IMR-90 (cell line): ENCODE measurements at regions of chr17 and their contacts with region 1.

Region 1: GRCh38 chr17:50675627-50676026 is 32.1 kb downstream of the ANKRD40 start:
- DNase-seq: no peak
- ATAC-seq: no peak
- H3K4me3 ChIP-seq: no peak overlapping the region
- H3K27ac ChIP-seq: no peak overlapping the region
- H3K4me1 ChIP-seq: peaks cover 8% of the 10 kb centered on the region
- H3K27me3 ChIP-seq: no peaks in the 10 kb centered on the region
- CTCF ChIP-seq: no peak
- POLR2A ChIP-seq: no peak
- RAD21 ChIP-seq: no peak

Region 2: GRCh38 chr17:50589095-50589705 is 86.4 kb before region 1 on chr17:
- CTCF ChIA-PET with region 1: no interaction called
- POLR2A ChIA-PET with region 1: no interaction called
- dilution Hi-C with region 1: no loop called
- in situ Hi-C with region 1: no loop called
- intact Hi-C with region 1: no loop called
- DNase-seq: peak; percentile 3
- ATAC-seq: peak; percentile 29; the same call in 1 of the 2 replicates
- H3K4me3 ChIP-seq: no peak overlapping the region
- H3K27ac ChIP-seq: no peak overlapping the region
- H3K4me1 ChIP-seq: peaks cover 2% of the 10 kb centered on the region; the same call in 1 of the 2 replicates
- H3K27me3 ChIP-seq: peaks cover 45% of the 10 kb centered on the region
- CTCF ChIP-seq: no peak
- POLR2A ChIP-seq: no peak
- RAD21 ChIP-seq: no peak

Region 3: GRCh38 chr17:50638851-50639767 is 36.5 kb before region 1 on chr17:
- CTCF ChIA-PET with region 1: no interaction called
- POLR2A ChIA-PET with region 1: no interaction called
- dilution Hi-C with region 1: no loop called
- in situ Hi-C with region 1: loop called (anchors 5 kb)
- intact Hi-C with region 1: no loop called
- DNase-seq: peak; percentile 97
- ATAC-seq: peak; percentile 79
- H3K4me3 ChIP-seq: no peak overlapping the region
- H3K27ac ChIP-seq: peak overlapping the region; percentile 75
- H3K4me1 ChIP-seq: peaks cover 45% of the 10 kb centered on the region
- H3K27me3 ChIP-seq: no peaks in the 10 kb centered on the region
- CTCF ChIP-seq: no peak
- POLR2A ChIP-seq: no peak
- RAD21 ChIP-seq: no peak